Endothelial cell of umbilical vein (primary cell): ENCODE measurements at regions of chr2 and their contacts with region 1.

Region 1: GRCh38 chr2:119820275-119820674 is 60.6 kb downstream of the PTPN4 start:
- DNase-seq: peak; percentile 97
- H3K4me3 ChIP-seq: no peak overlapping the region
- H3K27ac ChIP-seq: peak overlapping the region; percentile 78
- H3K4me1 ChIP-seq: peaks cover 34% of the 10 kb centered on the region
- H3K27me3 ChIP-seq: no peaks in the 10 kb centered on the region
- CTCF ChIP-seq: no peak
- POLR2A ChIP-seq: peak; percentile 30

Region 2: GRCh38 chr2:119803101-119803500 is 17.2 kb before region 1 on chr2:
- CTCF ChIA-PET with region 1: interaction called, 15 read pairs
- POLR2A ChIA-PET with region 1: no interaction called
- dilution Hi-C with region 1: no loop called
- intact Hi-C with region 1: loop called (anchors 2 kb)
- DNase-seq: peak; percentile 52
- H3K4me3 ChIP-seq: peak overlapping the region in 1 of 3 experiments; percentile 38
- H3K27ac ChIP-seq: peak overlapping the region; percentile 48
- H3K4me1 ChIP-seq: peaks cover 18% of the 10 kb centered on the region
- H3K27me3 ChIP-seq: no peaks in the 10 kb centered on the region
- CTCF ChIP-seq: no peak
- POLR2A ChIP-seq: no peak

Region 3: DNA sequence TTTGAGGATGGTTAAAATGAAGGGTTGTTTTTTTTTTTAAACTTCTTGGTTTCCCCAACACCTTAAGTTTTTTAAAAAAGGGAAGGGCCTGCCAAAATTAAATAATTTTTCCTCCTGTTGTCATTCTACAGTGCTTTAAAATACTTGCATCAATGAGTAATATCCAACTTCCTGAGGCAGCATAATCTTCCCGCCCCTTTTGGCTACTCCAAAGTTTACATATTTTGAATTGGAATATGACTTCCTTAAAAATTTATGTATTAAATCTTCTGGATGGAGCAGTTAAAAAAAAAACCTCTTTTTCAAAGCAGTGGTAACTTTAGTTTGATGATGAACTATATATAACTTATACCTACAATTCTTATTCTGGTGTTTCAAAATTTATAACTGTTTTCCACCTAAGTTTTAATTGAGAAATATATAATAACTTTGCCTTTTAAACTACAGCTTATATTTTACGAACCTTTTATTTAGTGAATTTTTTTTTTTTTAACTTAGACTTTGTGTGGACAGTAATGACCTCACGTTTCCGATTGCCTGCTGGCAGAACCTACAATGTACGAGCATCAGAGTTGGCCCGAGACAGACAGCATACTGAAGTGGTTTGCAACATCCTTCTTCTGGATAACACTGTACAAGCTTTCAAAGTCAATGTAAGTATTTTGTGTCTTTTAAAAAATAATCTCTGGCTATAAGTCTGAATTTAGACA is 10.8 kb before region 1 on chr2:
- CTCF ChIA-PET with region 1: interaction called, 17 read pairs
- POLR2A ChIA-PET with region 1: no interaction called
- dilution Hi-C with region 1: no loop called
- intact Hi-C with region 1: loop called (anchors 1 kb)
- DNase-seq: peak; percentile 88
- H3K4me3 ChIP-seq: peak overlapping the region in 2 of 3 experiments; percentile 7 to 43
- H3K27ac ChIP-seq: peak overlapping the region; percentile 96
- H3K4me1 ChIP-seq: peaks cover 22% of the 10 kb centered on the region
- H3K27me3 ChIP-seq: no peaks in the 10 kb centered on the region
- CTCF ChIP-seq: no peak
- POLR2A ChIP-seq: no peak

Region 4: DNA sequence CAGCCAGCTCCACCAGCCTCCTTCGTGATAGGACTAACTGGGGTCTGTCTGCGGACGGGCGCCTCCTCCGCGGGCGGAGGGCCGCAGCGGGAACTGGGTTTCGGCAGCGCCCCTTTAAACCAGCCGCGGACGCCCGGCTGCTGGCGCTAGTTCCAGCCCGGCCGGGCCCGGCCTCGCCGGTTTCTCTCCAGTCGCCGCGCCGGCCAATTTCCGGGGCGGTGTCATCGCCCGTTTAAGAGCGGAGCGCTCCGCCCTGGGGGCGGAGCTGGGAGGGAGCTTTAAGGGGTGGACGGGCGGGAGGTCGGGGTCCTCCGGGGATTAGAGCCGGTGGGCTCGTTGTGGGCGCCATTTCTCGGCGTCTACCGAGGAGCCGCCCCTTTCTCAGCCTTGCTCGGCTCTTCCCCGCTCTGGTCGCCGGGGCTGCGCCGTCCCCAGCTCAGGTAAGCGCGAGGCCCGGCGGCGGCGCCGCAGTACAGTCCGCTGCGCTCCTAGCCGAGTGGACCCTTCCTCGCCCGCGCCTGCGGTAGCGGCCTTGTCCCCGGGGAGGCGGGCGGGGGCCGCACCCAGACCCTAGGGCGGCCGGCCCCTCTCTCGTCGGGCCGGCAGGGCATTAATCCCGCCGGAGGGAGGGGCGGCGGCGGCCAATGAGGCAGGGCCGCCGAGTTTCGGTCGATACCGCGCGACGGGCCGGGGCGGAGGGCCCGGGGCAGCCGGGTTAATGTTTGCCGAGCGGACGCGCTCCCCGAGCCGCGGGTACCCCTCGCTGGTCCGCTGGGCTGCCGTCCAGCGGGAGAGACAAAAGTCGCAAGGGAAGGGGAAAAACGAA is 192.7 kb after region 1 on chr2 and contains the start of gene EPB41L5:
- CTCF ChIA-PET with region 1: no interaction called
- POLR2A ChIA-PET with region 1: no interaction called
- dilution Hi-C with region 1: no loop called
- intact Hi-C with region 1: loop called (anchors 2 kb)
- DNase-seq: peak; percentile 90
- H3K4me3 ChIP-seq: peak within 1 kb of the TSS; percentile 35 to 88 (median 46)
- H3K27ac ChIP-seq: peak within 1 kb of the TSS; percentile 30
- H3K4me1 ChIP-seq: peaks cover 24% of the 10 kb centered on the region
- H3K27me3 ChIP-seq: no peaks in the 10 kb centered on the region
- CTCF ChIP-seq: no peak
- POLR2A ChIP-seq: no peak
- total RNA-seq, gene EPB41L5: 13.6 and 15.1 TPM in 2 replicates

Region 5: GRCh38 chr2:120066800-120067547 is 246.7 kb after region 1 on chr2:
- CTCF ChIA-PET with region 1: no interaction called
- POLR2A ChIA-PET with region 1: no interaction called
- dilution Hi-C with region 1: no loop called
- intact Hi-C with region 1: no loop called
- DNase-seq: peak; percentile 21
- H3K4me3 ChIP-seq: no peak overlapping the region
- H3K27ac ChIP-seq: no peak overlapping the region
- H3K4me1 ChIP-seq: no peaks in the 10 kb centered on the region
- H3K27me3 ChIP-seq: no peaks in the 10 kb centered on the region
- CTCF ChIP-seq: no peak
- POLR2A ChIP-seq: no peak